PC-9 (cell line): ENCODE measurements at regions of chr9 and their contacts with region 1.

Region 1: GRCh38 chr9:134443168-134444037 is 117.1 kb downstream of the RXRA start:
- DNase-seq: peak; percentile 89 to 95
- H3K4me3 ChIP-seq: no peak overlapping the region
- H3K27ac ChIP-seq: no peak overlapping the region
- H3K4me1 ChIP-seq: peaks cover 6% of the 10 kb centered on the region
- H3K27me3 ChIP-seq: no peaks in the 10 kb centered on the region
- CTCF ChIP-seq: peak; percentile 96

Region 2: DNA sequence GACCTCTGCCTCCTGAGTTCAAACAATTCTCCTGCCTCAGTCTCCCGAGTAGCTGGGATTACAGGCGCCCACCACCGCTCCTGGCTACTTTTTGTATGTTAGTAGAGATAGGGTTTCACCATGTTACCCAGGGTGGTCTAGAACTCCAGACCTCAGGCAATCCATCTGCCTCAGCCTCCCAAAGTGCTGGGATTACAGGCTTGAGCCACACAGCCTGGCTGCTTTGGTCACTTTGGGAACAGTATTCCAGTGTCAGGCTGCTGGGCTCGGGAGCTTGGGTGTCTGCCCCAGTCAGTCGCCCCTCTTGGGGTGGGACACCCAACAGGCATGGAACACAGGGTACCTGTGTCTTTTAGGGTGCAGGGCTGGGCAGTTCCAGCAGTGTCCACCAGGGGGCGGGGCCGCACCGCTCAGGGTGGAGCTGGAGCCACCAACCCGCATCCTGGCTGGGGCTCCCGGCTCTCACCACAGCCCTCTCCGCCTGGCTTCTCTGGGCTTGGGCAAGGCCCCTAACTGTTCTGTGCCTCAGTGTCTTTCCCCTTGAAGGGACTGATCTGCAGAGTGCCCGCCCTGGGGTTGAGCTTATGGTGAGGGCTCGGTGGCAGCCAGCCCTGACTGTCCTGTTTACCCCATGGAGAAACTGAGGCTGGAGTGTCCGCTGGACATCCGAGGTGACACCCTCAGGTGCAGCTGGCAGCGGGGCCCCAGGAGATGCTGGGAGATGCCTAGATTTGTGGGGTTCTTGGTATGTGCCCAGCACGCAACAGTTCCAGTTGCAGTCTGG is 272.7 kb before region 1 on chr9:
- CTCF ChIA-PET with region 1: interaction called, 13 read pairs
- POLR2A ChIA-PET with region 1: no interaction called
- intact Hi-C with region 1: loop called (anchors 1 kb)
- DNase-seq: peak in 1 of 2 experiments; percentile 20
- H3K4me3 ChIP-seq: no peak overlapping the region
- H3K27ac ChIP-seq: no peak overlapping the region
- H3K4me1 ChIP-seq: peaks cover 1% of the 10 kb centered on the region; the same call in 1 of the 2 replicates
- H3K27me3 ChIP-seq: no peaks in the 10 kb centered on the region
- CTCF ChIP-seq: no peak

Region 3: DNA sequence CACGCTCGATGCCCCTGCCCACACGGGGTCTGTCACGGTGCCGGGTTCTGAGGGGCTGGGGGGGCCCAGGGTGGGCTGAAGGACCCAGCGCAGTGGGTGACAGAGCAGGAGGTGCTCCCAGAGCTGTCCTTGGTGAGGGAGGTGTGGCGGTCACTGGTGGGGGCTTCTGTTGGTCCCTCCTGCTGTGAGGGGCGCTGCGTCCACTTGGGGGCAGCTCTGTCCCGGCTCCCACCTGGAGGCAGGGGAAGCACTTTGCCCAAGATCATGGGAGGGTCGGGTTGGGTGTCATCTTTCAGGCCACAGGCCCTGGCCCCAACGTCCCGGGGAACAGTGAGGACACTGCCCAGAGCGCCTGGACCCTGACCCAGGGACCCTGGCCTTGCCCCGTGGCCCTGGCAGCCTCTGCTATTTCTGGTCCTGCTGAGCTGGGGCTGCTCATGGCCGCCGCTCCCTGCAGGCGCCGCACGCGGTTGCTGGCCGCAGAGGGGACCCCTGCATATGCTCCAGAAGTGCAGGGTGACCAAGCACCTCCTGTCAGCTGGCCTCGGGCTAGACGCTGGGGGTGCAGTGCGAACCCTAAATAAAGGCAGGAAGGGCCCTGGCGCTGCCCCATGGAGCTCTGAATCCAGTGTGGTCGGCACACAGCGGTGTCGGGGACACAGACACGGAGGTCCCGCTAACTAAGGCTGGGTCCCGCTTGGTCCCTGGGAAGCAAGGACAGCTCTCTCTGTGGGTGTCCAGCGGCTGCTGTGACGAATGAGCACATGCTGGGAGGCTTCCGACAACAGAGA is 267.4 kb before region 1 on chr9:
- CTCF ChIA-PET with region 1: interaction called, 13 read pairs
- POLR2A ChIA-PET with region 1: interaction called, 5 read pairs
- intact Hi-C with region 1: loop called (anchors 1 kb)
- DNase-seq: peak in 1 of 2 experiments; percentile 23
- H3K4me3 ChIP-seq: no peak overlapping the region
- H3K27ac ChIP-seq: no peak overlapping the region
- H3K4me1 ChIP-seq: no peaks in the 10 kb centered on the region
- H3K27me3 ChIP-seq: peaks cover 42% of the 10 kb centered on the region
- CTCF ChIP-seq: no peak

Region 4: GRCh38 chr9:134325817-134326723 is 117.3 kb before region 1 on chr9 and contains the start of gene RXRA:
- CTCF ChIA-PET with region 1: interaction called, 4 read pairs
- POLR2A ChIA-PET with region 1: no interaction called
- intact Hi-C with region 1: loop called (anchors 2 kb)
- DNase-seq: peak; percentile 58 to 93
- H3K4me3 ChIP-seq: peak within 1 kb of the TSS; percentile 87
- H3K27ac ChIP-seq: peak within 1 kb of the TSS; percentile 66
- H3K4me1 ChIP-seq: peaks cover 32% of the 10 kb centered on the region
- H3K27me3 ChIP-seq: no peaks in the 10 kb centered on the region
- CTCF ChIP-seq: no peak
- total RNA-seq, gene RXRA: 116 and 146 TPM in 2 replicates

Region 5: DNA sequence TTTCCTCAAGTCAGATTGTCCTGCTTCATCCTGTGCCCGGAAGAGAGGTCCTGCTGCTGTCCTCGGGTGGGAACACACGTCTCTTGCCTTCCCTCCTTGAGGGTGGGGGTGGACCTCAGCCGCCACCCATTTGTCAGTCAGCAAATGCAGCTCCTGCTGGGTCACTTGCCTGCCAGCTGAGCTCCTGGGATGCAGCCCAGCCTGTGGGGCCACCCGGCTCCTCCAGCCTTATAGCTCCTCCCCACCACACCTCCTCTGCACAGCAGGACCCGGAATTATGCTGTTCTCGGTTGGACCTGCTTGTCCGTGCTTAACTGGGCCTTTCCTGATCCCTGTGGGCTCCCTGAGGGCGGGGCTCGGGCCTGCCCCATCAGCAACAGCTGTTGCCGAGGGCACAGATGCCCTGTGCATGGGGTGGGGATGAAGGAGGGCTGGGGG is 64.5 kb before region 1 on chr9:
- CTCF ChIA-PET with region 1: interaction called, 7 read pairs
- POLR2A ChIA-PET with region 1: no interaction called
- intact Hi-C with region 1: loop called (anchors 2 kb)
- DNase-seq: peak; percentile 89 to 94
- H3K4me3 ChIP-seq: peak overlapping the region; percentile 36; the same call in 1 of the 2 replicates
- H3K27ac ChIP-seq: peak overlapping the region; percentile 94
- H3K4me1 ChIP-seq: peaks cover 95% of the 10 kb centered on the region
- H3K27me3 ChIP-seq: no peaks in the 10 kb centered on the region
- CTCF ChIP-seq: no peak

Region 6: GRCh38 chr9:134413890-134414731 is 29.3 kb before region 1 on chr9:
- CTCF ChIA-PET with region 1: no interaction called
- POLR2A ChIA-PET with region 1: no interaction called
- intact Hi-C with region 1: loop called (anchors 2 kb)
- DNase-seq: peak in 1 of 2 experiments; percentile 81
- H3K4me3 ChIP-seq: no peak overlapping the region
- H3K27ac ChIP-seq: no peak overlapping the region
- H3K4me1 ChIP-seq: peaks cover 47% of the 10 kb centered on the region
- H3K27me3 ChIP-seq: no peaks in the 10 kb centered on the region
- CTCF ChIP-seq: no peak